ENCODE measurements at regions of chr12 and their contacts with region 1.

Region 1: DNA sequence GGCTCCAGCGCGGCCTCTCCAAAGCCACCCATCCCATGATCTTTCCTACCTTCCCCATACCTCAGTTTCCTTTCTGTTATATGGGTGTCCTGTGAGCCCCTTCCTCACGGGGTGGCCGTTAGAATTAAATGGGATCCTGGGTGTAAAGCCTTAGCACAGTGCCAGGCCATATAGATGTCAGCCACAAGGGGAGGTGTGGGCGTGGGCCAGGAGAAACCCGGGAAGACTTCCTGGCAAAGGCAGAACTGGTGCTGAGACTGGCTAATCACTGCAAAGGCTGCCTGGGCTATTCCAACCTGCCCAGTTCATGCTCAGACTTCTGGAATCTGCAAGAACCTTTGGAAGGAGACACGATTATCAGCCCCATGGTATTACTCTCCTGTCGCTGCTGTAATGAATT is 11.0 kb upstream of the NCOR2 start:
- DNase-seq: no peak
- H3K4me3 ChIP-seq: no peak overlapping the region
- H3K27ac ChIP-seq: no peak overlapping the region
- H3K4me1 ChIP-seq: peaks cover 24% of the 10 kb centered on the region
- H3K27me3 ChIP-seq: no peaks in the 10 kb centered on the region
- CTCF ChIP-seq: peak in 1 of 2 donors; percentile 39

Region 2: GRCh38 chr12:124207617-124208016 is 370.8 kb before region 1 on chr12:
- CTCF ChIA-PET with region 1: no interaction called
- dilution Hi-C with region 1: no loop called
- in situ Hi-C with region 1: no loop called
- intact Hi-C with region 1: no loop called
- DNase-seq: no peak
- H3K4me3 ChIP-seq: no peak overlapping the region
- H3K27ac ChIP-seq: no peak overlapping the region
- H3K4me1 ChIP-seq: no peaks in the 10 kb centered on the region
- H3K27me3 ChIP-seq: no peaks in the 10 kb centered on the region
- CTCF ChIP-seq: no peak

Region 3: GRCh38 chr12:124740691-124741137 is 162.3 kb after region 1 on chr12:
- CTCF ChIA-PET with region 1: no interaction called
- dilution Hi-C with region 1: loop called (anchors 5 kb)
- in situ Hi-C with region 1: loop called in 1 of 2 experiments (anchors 10 kb)
- intact Hi-C with region 1: no loop called
- DNase-seq: peak; percentile 83
- H3K4me3 ChIP-seq: no peak overlapping the region
- H3K27ac ChIP-seq: no peak overlapping the region
- H3K4me1 ChIP-seq: peaks cover 15% of the 10 kb centered on the region
- H3K27me3 ChIP-seq: no peaks in the 10 kb centered on the region
- CTCF ChIP-seq: peak; percentile 28 to 58

Region 4: DNA sequence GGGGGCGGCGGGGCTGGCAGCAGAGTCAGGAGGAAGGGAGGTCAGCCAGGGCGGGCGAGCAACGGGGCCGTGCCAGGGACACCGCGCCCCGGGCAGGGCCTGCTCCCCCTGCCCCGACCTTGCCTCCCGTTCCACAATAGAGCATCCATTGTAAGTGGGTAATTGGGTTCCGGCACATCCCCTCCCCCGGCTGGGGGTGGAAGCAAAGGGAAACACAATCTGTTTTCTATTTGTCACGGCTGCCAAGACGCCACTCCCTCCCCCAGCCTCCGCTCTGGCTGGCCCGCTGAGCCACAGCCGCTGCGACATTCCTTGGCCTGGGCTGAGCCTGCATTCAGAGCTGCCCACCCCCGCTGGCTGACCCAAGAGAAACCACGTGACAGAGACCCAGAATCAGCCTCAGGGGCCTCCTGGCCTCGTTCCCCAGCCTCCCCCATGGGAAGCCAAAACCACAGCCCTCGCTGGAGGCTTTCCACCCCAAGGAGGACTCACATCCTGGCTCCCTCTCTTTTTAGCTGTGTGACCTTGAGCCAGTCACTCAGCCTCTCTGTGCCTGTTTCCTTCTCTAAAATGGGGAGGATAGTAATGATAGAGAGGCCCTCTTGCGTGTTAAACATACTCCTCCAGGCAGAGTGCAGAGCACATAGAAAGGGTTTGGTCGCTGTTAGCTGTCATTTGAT is 167.6 kb after region 1 on chr12:
- CTCF ChIA-PET with region 1: no interaction called
- dilution Hi-C with region 1: no loop called
- in situ Hi-C with region 1: loop called in 1 of 2 experiments (anchors 10 kb)
- intact Hi-C with region 1: no loop called
- DNase-seq: peak; percentile 77
- H3K4me3 ChIP-seq: no peak overlapping the region
- H3K27ac ChIP-seq: no peak overlapping the region
- H3K4me1 ChIP-seq: peaks cover 23% of the 10 kb centered on the region
- H3K27me3 ChIP-seq: no peaks in the 10 kb centered on the region
- CTCF ChIP-seq: no peak

Measured in mammary epithelial cell (primary cell).